ENCODE measurements at regions of chr1 and their contacts with region 1.

Region 1: DNA sequence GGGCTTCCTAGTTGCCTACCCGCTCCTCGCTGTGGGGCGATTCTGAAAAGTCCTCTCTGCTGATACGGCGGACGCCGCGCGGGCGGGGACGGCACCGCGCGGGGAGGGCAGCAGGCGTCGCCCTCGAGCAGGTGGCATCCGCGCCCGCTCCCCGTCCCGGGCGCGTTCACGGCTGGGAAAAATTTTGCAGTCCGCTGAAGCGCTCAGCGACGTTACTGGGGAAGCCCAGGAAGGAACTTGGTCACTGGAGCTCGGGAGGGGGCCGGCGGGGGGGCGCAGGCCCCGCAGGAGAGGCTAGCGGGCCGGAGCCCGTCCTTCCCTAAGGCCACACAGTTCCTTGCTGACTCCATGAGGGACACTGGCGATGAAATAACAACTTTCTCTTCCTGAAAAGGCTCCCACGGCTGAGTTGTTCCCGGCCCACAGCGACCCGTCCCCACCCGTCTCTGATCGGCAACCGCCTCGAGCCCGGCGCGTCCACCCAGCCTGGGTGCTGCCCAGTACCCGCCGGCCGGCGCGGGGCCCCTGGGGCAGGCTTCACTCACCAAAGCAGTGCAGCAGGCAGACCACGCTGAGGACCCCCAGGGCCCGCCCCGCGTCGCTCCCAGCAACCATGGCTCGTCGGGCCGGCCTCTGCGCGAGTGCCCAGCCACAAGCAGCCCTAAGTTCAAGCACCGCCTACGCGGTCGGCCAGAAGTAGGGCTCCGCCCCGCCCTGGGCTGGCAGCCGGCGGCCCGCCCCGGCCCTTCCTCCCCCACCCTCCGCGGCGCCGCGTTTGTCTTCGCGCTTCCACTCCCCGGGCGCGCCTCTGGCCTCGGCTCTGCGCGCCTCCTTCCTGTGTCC is at the start of gene CD58:
- DNase-seq: peak; percentile 52 to 91 (median 74)
- ATAC-seq: peak; percentile 81
- H3K4me3 ChIP-seq: peak within 1 kb of the TSS; percentile 96
- H3K4me3 Mint-ChIP-seq: peak within 1 kb of the TSS; percentile 96
- H3K27ac ChIP-seq: peak within 1 kb of the TSS; percentile 72 to 87
- H3K27ac Mint-ChIP-seq: peak within 1 kb of the TSS; percentile 91
- H3K4me1 ChIP-seq: peaks cover 34% of the 10 kb centered on the region
- H3K4me1 Mint-ChIP-seq: peaks cover 43% of the 10 kb centered on the region
- H3K27me3 ChIP-seq: no peaks in the 10 kb centered on the region
- H3K27me3 Mint-ChIP-seq: peaks cover 4% of the 10 kb centered on the region
- CTCF ChIP-seq: peak; percentile 72
- total RNA-seq, gene CD58: 4.2 to 5.7 TPM

Region 2: GRCh38 chr1:116139592-116140134 is 430.9 kb before region 1 on chr1:
- CTCF ChIA-PET with region 1: interaction called, 9 read pairs
- POLR2A ChIA-PET with region 1: no interaction called
- intact Hi-C with region 1: loop called (anchors 5 to 10 kb)
- DNase-seq: no peak
- ATAC-seq: no peak
- H3K4me3 ChIP-seq: no peak overlapping the region
- H3K4me3 Mint-ChIP-seq: no peak overlapping the region
- H3K27ac ChIP-seq: no peak overlapping the region
- H3K27ac Mint-ChIP-seq: no peak overlapping the region
- H3K4me1 ChIP-seq: peaks cover 8% of the 10 kb centered on the region
- H3K4me1 Mint-ChIP-seq: peaks cover 6% of the 10 kb centered on the region
- H3K27me3 ChIP-seq: no peaks in the 10 kb centered on the region
- H3K27me3 Mint-ChIP-seq: no peaks in the 10 kb centered on the region
- CTCF ChIP-seq: no peak

Region 3: DNA sequence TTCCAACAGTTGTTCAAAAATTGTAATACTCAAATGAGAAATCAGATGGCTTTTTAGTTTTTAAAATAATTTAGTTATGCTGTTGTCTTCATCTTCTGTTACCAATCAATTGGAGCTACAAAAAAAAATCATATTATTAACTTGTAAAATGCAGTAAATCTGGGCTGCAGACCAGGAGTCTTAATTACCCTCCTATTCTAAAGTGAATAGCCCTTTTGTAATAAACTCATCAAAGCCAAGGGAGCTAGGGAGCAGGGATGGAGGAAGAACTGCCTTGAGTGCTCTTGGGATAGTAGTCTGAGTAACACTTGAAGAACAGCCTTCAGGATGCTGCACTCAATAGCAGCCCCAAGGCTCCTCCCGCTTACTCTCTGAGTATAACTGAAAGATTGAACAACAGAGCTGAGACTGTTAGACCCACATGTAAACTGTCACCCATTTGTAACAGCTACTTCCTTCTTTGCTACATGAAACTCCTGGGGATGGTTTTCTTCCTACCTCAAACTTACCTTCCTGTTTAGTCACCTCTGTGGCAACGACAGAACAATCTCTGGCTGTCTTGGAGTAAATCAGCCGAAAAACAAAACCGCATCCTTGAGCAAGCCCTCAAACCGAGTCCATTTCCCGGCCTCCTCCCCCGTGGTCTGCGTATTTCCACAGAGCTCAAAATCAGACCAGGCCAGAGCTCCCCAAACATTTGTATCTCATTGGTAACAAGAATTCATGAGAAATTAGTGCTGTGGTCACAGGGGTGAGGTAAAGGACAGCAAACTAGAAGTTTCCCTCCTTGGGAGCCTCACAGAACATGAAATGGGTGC is 55.7 kb before region 1 on chr1:
- CTCF ChIA-PET with region 1: interaction called, 10 read pairs
- POLR2A ChIA-PET with region 1: interaction called, 8 read pairs
- intact Hi-C with region 1: no loop called
- DNase-seq: peak in 13 of 14 experiments; percentile 23 to 90 (median 52)
- ATAC-seq: peak; percentile 79
- H3K4me3 ChIP-seq: peak overlapping the region; percentile 1
- H3K4me3 Mint-ChIP-seq: peak overlapping the region; percentile 57
- H3K27ac ChIP-seq: peak overlapping the region; percentile 46 to 80
- H3K27ac Mint-ChIP-seq: peak overlapping the region; percentile 90
- H3K4me1 ChIP-seq: peaks cover 59% of the 10 kb centered on the region
- H3K4me1 Mint-ChIP-seq: peaks cover 65% of the 10 kb centered on the region
- H3K27me3 ChIP-seq: no peaks in the 10 kb centered on the region
- H3K27me3 Mint-ChIP-seq: no peaks in the 10 kb centered on the region
- CTCF ChIP-seq: no peak

Region 4: DNA sequence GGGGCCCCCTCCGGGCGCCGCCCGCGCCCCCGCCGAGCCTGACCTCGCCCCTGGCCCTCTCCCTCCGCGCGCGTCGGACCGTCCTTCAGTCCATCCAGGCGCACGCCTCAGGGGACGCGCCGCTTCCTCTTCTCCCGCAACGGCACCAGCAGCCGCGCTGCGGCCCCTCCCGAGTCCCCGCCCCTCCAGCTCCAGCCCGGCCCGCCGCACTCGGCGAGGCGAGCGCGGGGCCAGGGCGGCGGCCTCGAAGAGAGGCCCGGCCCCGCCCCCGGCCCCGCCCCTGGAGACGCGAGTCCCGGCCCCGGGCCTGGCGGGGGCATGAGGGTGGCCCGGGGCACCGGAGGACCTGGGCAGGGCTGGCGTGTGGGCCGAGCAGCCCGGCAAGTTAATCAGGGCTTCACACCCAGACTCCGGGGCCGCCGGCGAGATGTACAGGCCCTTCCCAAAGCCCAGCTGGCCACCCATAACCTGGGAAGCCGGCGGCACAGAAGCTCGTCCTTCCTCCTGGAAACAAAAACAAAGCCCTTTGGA is 97.1 kb after region 1 on chr1 and contains the start of gene IGSF3:
- CTCF ChIA-PET with region 1: interaction called, 6 read pairs
- POLR2A ChIA-PET with region 1: interaction called, 3 read pairs
- intact Hi-C with region 1: loop called in 1 of 2 experiments (anchors 5 kb)
- DNase-seq: peak in 10 of 14 experiments; percentile 14 to 72 (median 44)
- ATAC-seq: peak; percentile 71
- H3K4me3 ChIP-seq: peak within 1 kb of the TSS; percentile 43
- H3K4me3 Mint-ChIP-seq: peak within 1 kb of the TSS; percentile 78
- H3K27ac ChIP-seq: no peak within 1 kb of the TSS
- H3K27ac Mint-ChIP-seq: no peak within 1 kb of the TSS
- H3K4me1 ChIP-seq: peaks cover 16% of the 10 kb centered on the region
- H3K4me1 Mint-ChIP-seq: peaks cover 14% of the 10 kb centered on the region
- H3K27me3 ChIP-seq: peaks cover 23 to 25% of the 10 kb centered on the region in 2 experiments
- H3K27me3 Mint-ChIP-seq: peaks cover 71% of the 10 kb centered on the region
- CTCF ChIP-seq: no peak
- total RNA-seq, gene IGSF3: 0.08 to 0.22 TPM

Region 5: DNA sequence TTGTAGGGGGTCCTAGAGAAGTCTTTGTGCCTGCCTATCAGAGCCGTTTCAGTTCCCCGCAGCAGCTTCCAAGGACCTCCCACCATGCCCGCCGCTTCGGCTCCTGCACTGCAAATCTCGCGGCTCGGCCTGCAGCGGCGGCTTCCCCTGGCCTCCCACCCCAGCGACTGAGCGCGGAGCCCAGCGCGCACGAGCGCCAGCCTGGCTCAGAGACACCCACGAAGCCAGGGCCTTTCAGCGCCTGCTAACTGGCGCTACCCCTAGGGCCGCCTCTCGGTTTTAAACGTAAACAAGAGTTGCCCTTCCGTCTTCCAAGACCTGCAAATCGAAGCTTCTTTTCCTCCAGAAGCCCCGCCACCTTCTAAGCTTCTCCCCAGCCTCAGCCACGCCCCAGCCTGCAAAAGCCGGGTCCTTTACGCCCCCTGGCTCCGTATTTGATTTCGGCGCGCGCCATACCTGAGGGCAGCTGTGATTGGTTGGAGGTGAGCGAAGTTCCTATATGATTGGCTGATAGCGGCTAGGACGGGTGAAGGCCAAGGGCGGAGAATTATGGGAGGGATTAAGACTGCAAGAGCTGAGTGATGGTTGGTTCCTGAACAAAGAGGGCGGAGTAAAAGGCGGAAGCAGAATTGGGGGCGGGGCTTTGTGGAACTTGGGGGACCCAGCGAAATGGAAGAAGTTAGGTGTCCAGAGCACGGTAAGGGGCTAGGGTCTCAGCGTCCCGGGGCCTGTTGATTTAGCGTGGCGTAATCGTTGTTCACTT is 489.3 kb after region 1 on chr1 and contains the start of gene TTF2:
- CTCF ChIA-PET with region 1: interaction called, 6 read pairs
- POLR2A ChIA-PET with region 1: interaction called, 4 read pairs
- intact Hi-C with region 1: loop called (anchors 2 to 5 kb)
- DNase-seq: peak; percentile 88 to 99 (median 93)
- ATAC-seq: peak; percentile 90
- H3K4me3 ChIP-seq: peak within 1 kb of the TSS; percentile 91
- H3K4me3 Mint-ChIP-seq: no peak within 1 kb of the TSS
- H3K27ac ChIP-seq: peak within 1 kb of the TSS; percentile 71 to 87
- H3K27ac Mint-ChIP-seq: no peak within 1 kb of the TSS
- H3K4me1 ChIP-seq: peaks cover 18% of the 10 kb centered on the region
- H3K4me1 Mint-ChIP-seq: peaks cover 46% of the 10 kb centered on the region
- H3K27me3 ChIP-seq: no peaks in the 10 kb centered on the region
- H3K27me3 Mint-ChIP-seq: no peaks in the 10 kb centered on the region
- CTCF ChIP-seq: peak; percentile 31
- total RNA-seq, gene TTF2: 35.4 to 36.6 TPM

Region 6: GRCh38 chr1:117367047-117368018 is 796.8 kb after region 1 on chr1 and contains the start of gene MAN1A2:
- CTCF ChIA-PET with region 1: no interaction called
- POLR2A ChIA-PET with region 1: no interaction called
- intact Hi-C with region 1: loop called in 1 of 2 experiments (anchors 10 kb)
- DNase-seq: peak; percentile 47 to 87 (median 70)
- ATAC-seq: peak; percentile 62
- H3K4me3 ChIP-seq: peak within 1 kb of the TSS; percentile 69
- H3K4me3 Mint-ChIP-seq: peak within 1 kb of the TSS; percentile 97
- H3K27ac ChIP-seq: peak within 1 kb of the TSS; percentile 64 to 83
- H3K27ac Mint-ChIP-seq: peak within 1 kb of the TSS; percentile 98
- H3K4me1 ChIP-seq: peaks cover 35% of the 10 kb centered on the region
- H3K4me1 Mint-ChIP-seq: peaks cover 87% of the 10 kb centered on the region
- H3K27me3 ChIP-seq: no peaks in the 10 kb centered on the region
- H3K27me3 Mint-ChIP-seq: no peaks in the 10 kb centered on the region
- CTCF ChIP-seq: no peak
- total RNA-seq, gene MAN1A2: 45.6 to 49.7 TPM

Measured in CD4-positive, alpha-beta T cell (primary cell).